GM12878 (cell line): ENCODE measurements at regions of chrX and their contacts with region 1.

Region 1: GRCh38 chrX:49191033-49191871 is 5.1 kb upstream of the PRICKLE3 start:
- DNase-seq: peak; percentile 99
- ATAC-seq: peak; percentile 92
- H3K4me3 ChIP-seq: peak overlapping the region; percentile 74
- H3K27ac ChIP-seq: peak overlapping the region; percentile 65
- H3K4me1 ChIP-seq: peaks cover 3% of the 10 kb centered on the region; the same call in 1 of the 2 replicates
- H3K27me3 ChIP-seq: no peaks in the 10 kb centered on the region
- CTCF ChIP-seq: no peak
- EP300 ChIP-seq: no peak
- POLR2A ChIP-seq: peak; percentile 86
- RAD21 ChIP-seq: no peak

Region 2: DNA sequence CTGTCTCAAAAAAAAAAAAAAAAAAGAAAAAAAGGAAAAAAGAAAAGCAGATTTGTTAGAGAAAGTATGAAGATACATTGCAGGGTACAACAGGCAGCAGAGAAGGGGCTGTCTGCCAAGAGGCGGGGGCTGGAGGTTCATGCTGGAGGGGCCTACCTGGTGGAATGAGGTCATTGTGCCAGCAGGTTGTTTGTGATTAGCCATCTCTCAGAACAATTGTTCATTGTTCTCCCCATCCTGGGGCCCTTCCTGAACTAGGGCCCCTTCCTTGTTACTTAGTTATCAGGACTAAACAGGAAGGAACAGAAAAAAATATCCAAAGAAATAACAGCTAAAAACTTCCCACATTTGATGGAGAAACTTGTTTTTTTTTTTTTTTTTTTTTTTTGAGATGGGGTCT is 53.8 kb before region 1 on chrX:
- CTCF ChIA-PET with region 1: interaction called, 11 read pairs
- POLR2A ChIA-PET with region 1: no interaction called
- RAD21 ChIA-PET with region 1: interaction called, 4 read pairs
- SMC1A ChIA-PET with region 1: interaction called, 5 read pairs
- in situ Hi-C with region 1: no loop called
- intact Hi-C with region 1: no loop called
- DNase-seq: no peak
- ATAC-seq: no peak
- H3K4me3 ChIP-seq: no peak overlapping the region
- H3K27ac ChIP-seq: no peak overlapping the region
- H3K4me1 ChIP-seq: no peaks in the 10 kb centered on the region
- H3K27me3 ChIP-seq: no peaks in the 10 kb centered on the region
- CTCF ChIP-seq: no peak
- EP300 ChIP-seq: no peak
- POLR2A ChIP-seq: no peak
- RAD21 ChIP-seq: no peak

Region 3: GRCh38 chrX:49163555-49164419 is 27.5 kb before region 1 on chrX:
- CTCF ChIA-PET with region 1: interaction called, 57 read pairs
- POLR2A ChIA-PET with region 1: interaction called, 28 read pairs
- RAD21 ChIA-PET with region 1: interaction called, 26 read pairs
- SMC1A ChIA-PET with region 1: interaction called, 14 read pairs
- in situ Hi-C with region 1: no loop called
- intact Hi-C with region 1: loop called (anchors 2 kb)
- DNase-seq: peak; percentile 42
- ATAC-seq: peak; percentile 69
- H3K4me3 ChIP-seq: no peak overlapping the region; the same call in 1 of the 2 replicates
- H3K27ac ChIP-seq: peak overlapping the region; percentile 69
- H3K4me1 ChIP-seq: no peaks in the 10 kb centered on the region; the same call in none of the 2 replicates
- H3K27me3 ChIP-seq: no peaks in the 10 kb centered on the region
- CTCF ChIP-seq: peak; percentile 56 to 72 (median 64); a peak in 5 of 6 replicates
- EP300 ChIP-seq: no peak
- POLR2A ChIP-seq: peak; percentile 53
- RAD21 ChIP-seq: peak; percentile 46

Region 4: DNA sequence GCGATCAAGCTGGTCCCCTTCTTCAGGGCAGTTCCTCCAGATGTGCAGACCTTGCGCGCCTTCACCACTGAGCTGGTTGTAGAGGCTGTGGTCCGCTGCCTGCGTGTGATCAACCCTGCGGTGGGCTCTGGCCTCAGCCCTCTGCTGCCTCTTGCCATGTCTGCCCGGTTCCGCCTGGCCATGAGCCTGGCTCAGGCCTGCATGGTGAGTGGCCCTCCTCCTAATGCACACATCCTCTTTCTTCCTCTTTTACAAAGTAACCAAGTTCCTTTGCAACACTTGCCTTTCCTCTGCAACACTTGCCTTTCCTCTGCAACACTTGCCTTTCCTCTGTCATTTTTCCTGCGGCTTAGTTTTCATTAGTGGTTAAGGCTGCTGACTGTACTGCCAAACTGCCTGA is 45.8 kb after region 1 on chrX:
- CTCF ChIA-PET with region 1: interaction called, 4 read pairs
- POLR2A ChIA-PET with region 1: interaction called, 5 read pairs
- RAD21 ChIA-PET with region 1: interaction called, 6 read pairs
- SMC1A ChIA-PET with region 1: interaction called, 9 read pairs
- in situ Hi-C with region 1: no loop called
- intact Hi-C with region 1: loop called (anchors 5 kb)
- DNase-seq: no peak
- ATAC-seq: peak; percentile 72
- H3K4me3 ChIP-seq: peak overlapping the region; percentile 62
- H3K27ac ChIP-seq: peak overlapping the region; percentile 48
- H3K4me1 ChIP-seq: peaks cover 5% of the 10 kb centered on the region
- H3K27me3 ChIP-seq: no peaks in the 10 kb centered on the region
- CTCF ChIP-seq: no peak
- EP300 ChIP-seq: no peak
- POLR2A ChIP-seq: no peak
- RAD21 ChIP-seq: no peak

Region 5: GRCh38 chrX:49247916-49248811 is 56.9 kb after region 1 on chrX:
- CTCF ChIA-PET with region 1: no interaction called
- POLR2A ChIA-PET with region 1: no interaction called
- RAD21 ChIA-PET with region 1: no interaction called
- SMC1A ChIA-PET with region 1: no interaction called
- in situ Hi-C with region 1: no loop called
- intact Hi-C with region 1: no loop called
- DNase-seq: no peak
- ATAC-seq: no peak
- H3K4me3 ChIP-seq: no peak overlapping the region
- H3K27ac ChIP-seq: no peak overlapping the region
- H3K4me1 ChIP-seq: no peaks in the 10 kb centered on the region
- H3K27me3 ChIP-seq: no peaks in the 10 kb centered on the region
- CTCF ChIP-seq: no peak
- EP300 ChIP-seq: no peak
- POLR2A ChIP-seq: no peak
- RAD21 ChIP-seq: no peak